ENCODE measurements at regions of chr2 and their contacts with region 1.

Region 1: DNA sequence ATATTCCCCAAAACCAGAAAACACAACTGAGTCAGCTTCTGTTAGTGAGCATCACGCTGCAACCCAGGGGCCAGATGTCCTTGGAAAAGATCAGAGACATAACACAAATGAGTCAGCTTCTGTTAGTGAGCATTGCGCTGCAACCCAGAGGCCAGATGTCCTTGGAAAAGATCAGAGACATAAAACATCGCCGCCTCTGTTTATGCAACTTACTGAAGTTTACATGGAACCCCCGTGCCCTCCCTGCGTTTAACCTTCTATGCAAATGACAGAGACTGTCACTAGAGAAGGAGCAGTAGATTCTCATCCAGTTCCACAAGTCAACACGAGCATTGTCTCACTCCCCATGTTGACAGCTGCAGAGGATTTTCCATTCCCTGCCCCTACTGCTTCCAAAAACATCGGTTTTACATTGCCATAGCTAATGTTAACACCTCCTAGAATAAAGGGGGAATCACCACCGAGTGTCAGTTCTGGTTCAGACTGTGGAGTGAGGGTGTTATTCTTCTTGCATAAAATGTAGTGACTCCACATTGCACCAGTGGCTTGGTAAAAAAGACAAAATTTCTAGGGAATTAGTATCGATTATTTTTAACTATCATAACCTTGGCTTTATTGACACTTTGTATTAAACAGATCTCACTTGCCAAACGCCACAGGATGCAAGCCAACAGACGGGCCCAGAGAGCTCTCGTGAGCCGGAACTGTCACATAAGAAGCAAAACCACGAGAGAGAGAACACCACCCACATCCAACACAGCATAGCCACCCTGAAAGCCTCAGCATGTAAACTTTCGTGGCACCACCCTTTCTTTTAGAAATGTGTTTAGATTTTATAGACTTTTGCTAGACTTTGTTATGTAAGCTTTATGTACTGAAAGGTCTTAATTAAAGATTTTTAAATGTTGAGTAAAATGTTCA is 87.7 kb downstream of the SH3YL1 start:
- DNase-seq: no peak
- ATAC-seq: peak; percentile 72
- H3K4me3 ChIP-seq: no peak overlapping the region
- H3K27ac ChIP-seq: no peak overlapping the region
- H3K4me1 ChIP-seq: no peaks in the 10 kb centered on the region
- H3K27me3 ChIP-seq: no peaks in the 10 kb centered on the region
- CTCF ChIP-seq: no peak
- EP300 ChIP-seq: no peak
- POLR2A ChIP-seq: no peak
- RAD21 ChIP-seq: no peak

Region 2: DNA sequence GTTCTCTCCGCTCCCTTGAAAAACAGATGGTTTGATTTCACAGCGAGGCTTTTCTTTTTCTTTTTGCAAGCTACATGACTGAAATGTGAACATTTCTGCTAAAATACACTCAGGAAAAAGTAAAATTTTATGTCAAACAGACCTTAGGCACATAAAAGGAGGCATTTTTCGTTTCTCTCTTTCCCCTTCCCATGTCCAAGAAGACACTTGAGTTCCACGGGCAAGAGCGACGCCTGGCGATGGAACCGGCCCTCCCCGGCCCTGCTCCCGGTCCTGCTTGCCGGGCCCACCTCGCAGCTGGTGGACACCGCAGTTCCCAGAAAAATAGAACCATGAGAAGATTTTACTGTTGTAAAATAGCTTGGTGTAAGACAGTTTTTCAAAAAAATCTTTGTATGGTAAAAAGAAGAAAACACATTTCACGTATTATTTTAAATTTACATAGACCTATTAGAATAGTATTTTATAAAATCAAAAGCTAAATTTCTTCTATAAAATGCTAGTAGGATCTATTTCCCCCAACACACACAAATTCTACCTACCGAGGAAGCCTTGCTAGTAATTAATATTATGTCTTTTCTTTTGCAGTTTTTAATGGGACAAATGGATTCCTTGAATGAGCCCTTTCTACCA is 114.1 kb after region 1 on chr2:
- CTCF ChIA-PET with region 1: interaction called, 4 read pairs
- POLR2A ChIA-PET with region 1: no interaction called
- RAD21 ChIA-PET with region 1: interaction called, 4 read pairs
- SMC1A ChIA-PET with region 1: interaction called, 3 read pairs
- in situ Hi-C with region 1: no loop called
- intact Hi-C with region 1: loop called (anchors 1 kb)
- DNase-seq: no peak
- ATAC-seq: peak; percentile 77
- H3K4me3 ChIP-seq: peak overlapping the region; percentile 20; the same call in 1 of the 2 replicates
- H3K27ac ChIP-seq: no peak overlapping the region
- H3K4me1 ChIP-seq: no peaks in the 10 kb centered on the region
- H3K27me3 ChIP-seq: peaks cover 2 to 3% of the 10 kb centered on the region in 2 experiments; a peak in 2 of 4 replicates
- CTCF ChIP-seq: peak; percentile 65 to 77 (median 66)
- EP300 ChIP-seq: no peak
- POLR2A ChIP-seq: no peak
- RAD21 ChIP-seq: peak; percentile 66

Region 3: DNA sequence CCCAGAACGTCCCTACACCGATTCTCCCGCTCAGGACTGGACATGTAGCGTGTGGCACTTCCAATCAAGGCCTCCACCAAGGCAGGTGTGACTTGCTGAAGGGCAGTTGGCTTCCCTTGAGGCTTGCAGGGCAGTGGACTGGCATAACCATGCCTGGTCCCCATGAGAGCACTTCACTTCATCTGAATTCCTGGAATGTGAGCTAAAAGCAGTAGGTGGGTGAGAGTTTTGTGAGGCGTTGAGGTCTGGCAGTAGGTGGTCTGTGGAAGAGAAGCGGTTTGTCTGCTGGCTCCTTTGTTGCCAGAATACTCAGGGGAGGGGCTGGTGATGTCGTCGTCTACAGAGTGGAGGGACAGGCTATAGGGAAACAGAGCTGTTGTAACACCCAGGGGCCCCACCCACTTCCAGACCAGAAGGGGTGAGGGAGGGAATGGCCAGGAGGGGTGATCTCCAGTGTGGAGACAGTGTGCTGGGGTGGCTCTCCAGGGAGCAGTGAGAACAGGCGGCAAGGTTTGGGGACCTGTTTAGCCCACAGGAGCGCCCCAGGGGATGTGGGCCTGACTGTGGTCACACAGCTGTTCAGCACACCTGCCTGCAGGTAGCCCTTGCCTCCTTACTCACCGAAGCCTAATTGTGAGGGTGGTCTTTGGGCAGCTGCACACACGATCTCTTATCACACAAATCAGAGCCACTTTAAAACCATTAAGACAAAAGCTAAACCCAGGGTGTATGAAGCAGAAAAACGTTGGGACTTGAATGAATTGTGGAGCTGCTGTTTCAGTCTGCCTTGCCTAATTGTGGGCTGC is 133.2 kb after region 1 on chr2:
- CTCF ChIA-PET with region 1: no interaction called
- POLR2A ChIA-PET with region 1: no interaction called
- RAD21 ChIA-PET with region 1: no interaction called
- SMC1A ChIA-PET with region 1: no interaction called
- in situ Hi-C with region 1: no loop called
- intact Hi-C with region 1: no loop called
- DNase-seq: no peak
- ATAC-seq: no peak
- H3K4me3 ChIP-seq: no peak overlapping the region
- H3K27ac ChIP-seq: no peak overlapping the region
- H3K4me1 ChIP-seq: no peaks in the 10 kb centered on the region
- H3K27me3 ChIP-seq: no peaks in the 10 kb centered on the region
- CTCF ChIP-seq: no peak
- EP300 ChIP-seq: no peak
- POLR2A ChIP-seq: no peak
- RAD21 ChIP-seq: no peak

Measured in GM12878 (cell line).